GM18951 (cell line): ENCODE measurements at regions of chr1 and their contacts with region 1.

Region 1: DNA sequence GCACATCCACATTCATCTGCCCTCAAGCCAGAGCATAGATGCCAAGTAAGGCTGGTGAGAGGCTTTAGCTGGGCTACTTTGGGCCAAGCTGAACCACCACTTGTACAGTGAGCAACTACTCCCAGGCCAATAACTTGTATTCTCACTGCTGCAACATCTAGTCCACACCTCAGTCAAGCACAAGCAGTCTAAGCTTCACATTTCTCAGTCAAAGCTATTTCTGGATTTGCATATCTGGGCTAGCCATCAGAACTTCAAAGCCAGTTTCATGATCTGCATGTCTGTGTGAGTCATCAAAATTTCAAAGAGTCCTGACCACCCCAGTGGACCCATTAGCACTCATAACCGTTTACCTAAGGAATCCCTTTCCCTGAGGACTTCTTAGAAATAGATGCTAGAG is 77.7 kb upstream of the DIRAS3 start:
- POLR2A ChIP-seq: no peak

Region 2: GRCh38 chr1:68162761-68163160 is 34.6 kb after region 1 on chr1:
- in situ Hi-C with region 1: no loop called
- POLR2A ChIP-seq: no peak

Region 3: DNA sequence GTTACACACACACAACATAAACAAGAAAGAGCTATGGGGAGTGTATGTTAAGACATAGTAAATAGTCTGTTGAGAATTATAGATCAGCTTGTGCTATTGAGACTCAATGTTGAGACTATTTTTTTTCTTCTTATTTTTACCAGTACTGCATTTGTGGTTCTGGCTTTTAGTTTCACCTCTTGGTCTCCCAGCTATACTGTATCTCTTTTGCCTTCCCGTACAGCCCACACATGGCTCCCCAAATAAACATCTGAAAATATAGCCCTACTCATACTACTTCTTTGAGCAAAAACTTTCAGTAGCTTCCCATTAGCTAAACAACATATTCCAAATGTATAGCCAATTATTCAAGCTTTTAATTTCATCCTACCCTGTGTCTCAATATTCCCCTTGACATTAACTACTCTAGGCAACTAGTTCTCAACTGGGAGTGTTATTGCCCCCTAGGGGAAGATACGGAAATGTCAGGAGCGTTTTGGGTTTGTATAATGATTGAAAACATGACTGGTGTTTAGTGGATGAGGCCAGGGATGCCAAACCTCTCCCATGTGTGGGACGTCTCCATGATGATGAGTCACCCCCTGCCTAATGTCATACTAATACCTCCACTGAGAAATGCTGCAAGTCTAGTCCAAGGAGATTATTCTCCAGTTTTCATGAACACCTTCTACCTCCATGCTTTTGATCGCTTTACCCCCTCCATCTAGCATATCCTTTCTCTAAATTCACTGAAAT is 314.8 kb after region 1 on chr1:
- in situ Hi-C with region 1: loop called (anchors 25 kb)
- POLR2A ChIP-seq: no peak

Region 4: DNA sequence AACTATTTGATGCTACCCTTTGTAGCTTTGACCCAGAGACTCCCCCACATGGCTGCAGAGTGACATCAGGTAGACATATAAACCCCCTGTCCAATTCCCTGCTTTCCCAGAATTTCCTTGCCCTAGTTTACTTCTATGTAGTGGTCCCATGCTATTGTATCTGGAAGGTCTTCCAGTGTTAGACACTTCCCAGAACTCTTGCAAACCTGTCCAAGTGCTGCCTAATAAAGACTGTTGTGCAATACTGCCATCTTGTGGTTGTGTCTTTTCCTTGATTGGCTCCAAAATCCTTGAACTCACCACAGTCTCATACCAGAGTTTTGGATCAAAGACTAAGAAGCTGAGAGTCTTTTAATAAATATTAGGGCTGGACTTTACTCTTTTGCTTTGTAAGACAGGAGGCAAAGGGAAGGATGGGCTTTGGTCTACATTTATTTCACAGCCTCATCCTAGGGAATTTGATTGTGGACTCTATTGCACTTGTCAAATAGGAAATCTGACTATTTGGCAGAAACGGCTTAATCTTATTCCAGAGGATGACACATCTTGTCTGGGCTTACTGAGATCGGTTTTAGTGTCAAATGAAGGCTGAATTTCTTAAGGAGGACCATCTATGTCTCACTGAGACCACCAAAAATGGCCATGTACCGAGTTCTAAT is 1609.5 kb after region 1 on chr1:
- in situ Hi-C with region 1: loop called (anchors 25 kb)
- POLR2A ChIP-seq: no peak